ENCODE measurements at regions of chr7 and their contacts with region 1.

Region 1: GRCh38 chr7:2471396-2471795 is 4.8 kb downstream of the GRIFIN start:
- DNase-seq: no peak
- H3K4me3 Mint-ChIP-seq: no peak overlapping the region
- H3K27ac Mint-ChIP-seq: no peak overlapping the region
- H3K4me1 Mint-ChIP-seq: peaks cover 4% of the 10 kb centered on the region
- H3K27me3 Mint-ChIP-seq: peaks cover 15% of the 10 kb centered on the region

Region 2: DNA sequence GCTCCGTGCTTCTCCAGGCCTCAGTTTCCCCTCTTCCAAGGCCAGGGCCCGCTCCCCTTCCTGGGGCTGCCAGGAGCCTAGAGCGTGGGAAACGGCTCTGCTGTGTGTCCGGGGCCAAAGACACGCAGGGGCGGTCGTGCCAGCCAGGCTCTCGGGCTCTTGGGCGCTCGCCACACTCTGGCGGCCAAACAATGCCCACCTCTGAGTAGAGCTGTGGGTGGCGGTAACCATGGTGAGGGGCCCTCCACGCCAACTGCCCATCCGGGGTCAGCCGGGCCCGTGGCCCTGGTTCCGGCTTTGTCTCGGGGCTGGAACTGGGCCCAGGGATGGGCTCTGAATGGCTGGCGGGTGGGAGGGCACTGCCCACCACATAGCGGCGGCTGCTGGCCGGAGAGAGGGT is 11.2 kb before region 1 on chr7:
- CTCF ChIA-PET with region 1: interaction called, 53 read pairs
- POLR2A ChIA-PET with region 1: no interaction called
- DNase-seq: no peak
- H3K4me3 Mint-ChIP-seq: no peak overlapping the region
- H3K27ac Mint-ChIP-seq: no peak overlapping the region
- H3K4me1 Mint-ChIP-seq: peaks cover 9% of the 10 kb centered on the region
- H3K27me3 Mint-ChIP-seq: peaks cover 8% of the 10 kb centered on the region

Region 3: GRCh38 chr7:2537981-2538851 is 66.8 kb after region 1 on chr7:
- CTCF ChIA-PET with region 1: no interaction called
- POLR2A ChIA-PET with region 1: no interaction called
- DNase-seq: no peak
- H3K4me3 Mint-ChIP-seq: no peak overlapping the region
- H3K27ac Mint-ChIP-seq: no peak overlapping the region
- H3K4me1 Mint-ChIP-seq: no peaks in the 10 kb centered on the region
- H3K27me3 Mint-ChIP-seq: no peaks in the 10 kb centered on the region